Activated B cell treated with CpG ODN at 0.5 μM for 24 hours (primary cell): ENCODE measurements at regions of chr1 and their contacts with region 1.

Region 1: DNA sequence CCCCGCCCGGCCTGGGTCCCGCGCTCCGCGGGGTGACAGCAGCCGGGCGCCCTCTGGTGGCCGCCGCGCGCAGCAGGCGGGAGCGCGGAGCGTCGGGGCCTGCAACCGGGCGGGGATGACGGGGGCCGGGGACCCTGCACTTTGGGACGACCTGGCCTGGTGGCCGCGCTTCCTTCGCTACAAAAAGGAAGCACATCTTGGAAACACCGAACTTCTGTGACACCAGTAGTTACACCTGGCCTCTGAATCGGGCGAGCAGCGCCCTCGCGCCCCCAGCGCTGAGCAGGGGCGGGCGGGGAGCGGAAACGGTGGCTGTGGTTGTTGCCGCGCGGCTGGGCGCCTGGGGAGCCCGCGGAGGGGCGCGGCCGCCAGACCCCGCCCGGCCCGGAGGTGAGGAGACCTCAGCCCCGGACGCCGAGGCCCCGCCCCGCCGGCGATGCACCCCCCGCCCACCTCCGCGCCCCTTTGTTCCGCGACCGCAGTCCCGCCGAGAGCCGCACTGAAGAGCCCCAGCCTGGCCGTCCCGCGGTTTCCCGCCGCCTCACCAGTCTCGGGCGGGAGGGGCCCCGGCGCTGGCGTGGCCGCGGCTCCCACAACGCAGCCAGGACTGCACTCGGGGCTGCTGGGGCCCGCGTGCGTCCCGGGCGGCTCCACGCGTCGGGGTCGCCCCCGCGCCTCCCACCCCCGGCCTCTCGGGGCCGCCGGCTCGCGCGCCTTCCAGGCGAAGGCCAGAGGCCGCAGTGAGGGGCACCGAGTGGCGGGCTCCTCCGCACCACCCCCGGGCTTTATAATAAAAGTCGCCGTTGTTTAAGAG is 59.3 kb downstream of the H3-3A start:
- DNase-seq: peak; percentile 88
- ATAC-seq: peak; percentile 66
- H3K4me3 Mint-ChIP-seq: peak overlapping the region; percentile 92
- H3K27ac Mint-ChIP-seq: peak overlapping the region; percentile 100
- H3K4me1 Mint-ChIP-seq: peaks cover 79% of the 10 kb centered on the region
- H3K27me3 Mint-ChIP-seq: no peaks in the 10 kb centered on the region
- CTCF ChIP-seq: no peak

Region 2: GRCh38 chr1:225474986-225475820 is 646.6 kb before region 1 on chr1:
- CTCF ChIA-PET with region 1: no interaction called
- POLR2A ChIA-PET with region 1: no interaction called
- intact Hi-C with region 1: loop called (anchors 5 kb)
- DNase-seq: peak; percentile 84
- ATAC-seq: peak; percentile 83
- H3K4me3 Mint-ChIP-seq: no peak overlapping the region
- H3K27ac Mint-ChIP-seq: no peak overlapping the region
- H3K4me1 Mint-ChIP-seq: peaks cover 40% of the 10 kb centered on the region
- H3K27me3 Mint-ChIP-seq: no peaks in the 10 kb centered on the region
- CTCF ChIP-seq: peak; percentile 100

Region 3: DNA sequence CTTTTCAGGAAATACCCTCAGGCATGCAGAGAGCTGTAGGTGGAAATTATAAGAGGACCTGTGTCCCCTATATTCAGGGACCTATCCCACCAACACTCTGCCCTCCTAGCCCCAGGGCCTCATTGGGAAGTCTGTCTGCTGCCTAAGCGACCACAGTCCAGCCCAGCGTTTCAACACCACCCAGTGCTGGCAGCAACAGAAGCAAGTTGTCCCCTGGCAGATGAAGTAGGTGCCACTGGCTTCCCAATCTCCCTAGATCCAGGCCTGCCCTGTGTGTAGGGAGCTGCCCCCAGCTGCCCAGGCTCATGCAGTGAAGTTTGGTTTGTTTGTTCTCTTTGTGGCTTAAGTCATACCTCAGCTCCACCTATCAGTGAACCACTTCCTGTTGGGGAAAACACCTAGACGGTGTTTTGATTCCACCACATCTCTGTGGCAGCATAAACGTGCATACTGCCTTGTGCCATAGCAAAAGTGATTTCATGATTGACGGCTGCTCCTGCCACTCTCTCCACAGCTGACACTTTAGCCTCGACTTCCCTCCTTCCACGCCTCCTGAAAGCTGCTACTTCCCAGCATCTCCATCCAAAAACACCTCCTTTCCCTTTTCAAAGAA is 224.8 kb before region 1 on chr1:
- CTCF ChIA-PET with region 1: no interaction called
- POLR2A ChIA-PET with region 1: no interaction called
- intact Hi-C with region 1: no loop called
- DNase-seq: peak; percentile 34
- ATAC-seq: peak; percentile 99
- H3K4me3 Mint-ChIP-seq: peak overlapping the region; percentile 48
- H3K27ac Mint-ChIP-seq: peak overlapping the region; percentile 95
- H3K4me1 Mint-ChIP-seq: peaks cover 37% of the 10 kb centered on the region
- H3K27me3 Mint-ChIP-seq: no peaks in the 10 kb centered on the region
- CTCF ChIP-seq: no peak

Region 4: DNA sequence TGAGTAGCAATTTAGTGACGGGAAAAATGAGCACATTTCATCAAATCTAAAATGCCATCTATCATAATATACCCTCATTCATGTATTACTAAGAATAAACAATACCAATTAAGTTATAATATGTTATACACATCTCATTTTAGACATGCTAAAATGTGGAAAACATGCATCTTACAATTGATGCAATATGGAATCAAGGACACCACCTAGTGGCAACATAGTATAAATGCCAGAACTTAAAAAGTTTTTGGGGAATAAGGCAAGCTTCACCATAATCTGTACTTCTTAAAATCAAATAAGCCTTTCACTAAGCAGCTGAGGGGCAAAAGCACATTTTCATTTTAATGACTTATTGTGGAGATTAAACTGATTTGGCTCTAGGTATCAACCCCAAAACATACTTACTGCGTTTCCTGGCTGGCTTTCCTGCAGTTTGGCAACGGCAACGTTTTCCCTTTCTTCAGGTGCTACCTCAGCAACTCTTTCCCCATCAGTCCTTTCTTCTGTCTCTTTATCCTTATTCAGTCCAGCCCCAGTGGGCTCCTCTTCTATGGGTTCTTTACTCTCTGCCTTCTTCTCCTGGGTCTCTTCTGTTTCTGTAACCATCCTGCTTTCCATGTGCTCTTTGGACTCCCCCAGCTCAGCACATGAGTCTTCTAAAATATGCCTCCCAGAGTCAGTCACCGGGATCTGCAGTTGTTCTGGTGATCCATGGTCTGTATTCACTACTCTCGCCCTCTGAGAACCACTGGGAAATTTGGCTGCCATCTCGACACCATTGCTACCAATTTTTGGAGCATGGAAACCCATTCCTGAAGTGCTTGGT is 134.1 kb before region 1 on chr1:
- CTCF ChIA-PET with region 1: interaction called, 3 read pairs
- POLR2A ChIA-PET with region 1: no interaction called
- intact Hi-C with region 1: loop called (anchors 1 kb)
- DNase-seq: no peak
- ATAC-seq: peak; percentile 69
- H3K4me3 Mint-ChIP-seq: no peak overlapping the region
- H3K27ac Mint-ChIP-seq: peak overlapping the region; percentile 5
- H3K4me1 Mint-ChIP-seq: peaks cover 23% of the 10 kb centered on the region
- H3K27me3 Mint-ChIP-seq: no peaks in the 10 kb centered on the region
- CTCF ChIP-seq: peak; percentile 54

Region 5: DNA sequence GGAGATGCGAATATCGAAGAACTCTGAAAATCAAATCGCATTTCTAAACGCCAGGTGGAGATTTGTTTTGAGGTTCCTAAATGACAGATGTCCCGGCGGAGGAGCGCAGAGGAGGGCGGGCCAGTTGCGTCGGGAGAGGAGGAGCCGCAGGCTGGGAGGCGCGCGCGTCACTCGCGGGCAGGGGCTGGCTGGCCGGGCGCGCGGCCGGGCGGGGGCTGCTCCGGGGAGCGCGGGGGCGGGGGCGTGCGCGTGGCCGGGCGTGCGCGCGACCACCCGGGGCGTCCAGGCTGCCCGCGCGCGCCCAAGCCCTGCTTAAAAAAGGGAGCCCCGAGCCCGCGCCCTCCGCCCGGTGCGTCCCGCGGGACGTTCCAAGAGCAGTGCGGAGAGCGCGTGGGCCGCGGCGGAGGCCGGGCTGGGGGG is 12.0 kb before region 1 on chr1:
- CTCF ChIA-PET with region 1: interaction called, 29 read pairs
- POLR2A ChIA-PET with region 1: interaction called, 182 read pairs
- intact Hi-C with region 1: loop called (anchors 1 kb)
- DNase-seq: peak; percentile 90
- ATAC-seq: peak; percentile 66
- H3K4me3 Mint-ChIP-seq: peak overlapping the region; percentile 91
- H3K27ac Mint-ChIP-seq: peak overlapping the region; percentile 93
- H3K4me1 Mint-ChIP-seq: peaks cover 42% of the 10 kb centered on the region
- H3K27me3 Mint-ChIP-seq: no peaks in the 10 kb centered on the region
- CTCF ChIP-seq: no peak

Region 6: DNA sequence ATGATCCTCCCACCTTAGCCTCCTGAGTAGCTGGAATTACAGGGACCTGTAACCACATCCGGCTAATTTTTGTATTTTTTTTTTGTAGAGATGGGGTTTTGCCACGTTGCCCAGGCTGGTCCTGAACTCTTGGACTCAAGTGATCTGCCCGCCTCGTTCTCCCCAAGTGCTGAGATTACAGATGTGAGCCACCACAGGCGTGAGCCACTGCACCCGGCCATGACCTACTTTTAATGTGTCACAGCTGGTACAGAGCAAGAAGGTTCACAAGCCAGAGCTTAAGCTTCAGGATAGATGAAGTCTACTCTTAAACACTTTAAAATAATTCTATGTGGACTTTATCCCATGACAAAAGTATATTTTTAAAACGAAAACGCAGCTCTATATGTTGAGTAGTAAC is 41.1 kb after region 1 on chr1:
- CTCF ChIA-PET with region 1: interaction called, 26 read pairs
- POLR2A ChIA-PET with region 1: interaction called, 5 read pairs
- intact Hi-C with region 1: loop called (anchors 2 kb)
- DNase-seq: no peak
- ATAC-seq: no peak
- H3K4me3 Mint-ChIP-seq: no peak overlapping the region
- H3K27ac Mint-ChIP-seq: peak overlapping the region; percentile 18
- H3K4me1 Mint-ChIP-seq: peaks cover 48% of the 10 kb centered on the region
- H3K27me3 Mint-ChIP-seq: no peaks in the 10 kb centered on the region
- CTCF ChIP-seq: no peak

Region 7: DNA sequence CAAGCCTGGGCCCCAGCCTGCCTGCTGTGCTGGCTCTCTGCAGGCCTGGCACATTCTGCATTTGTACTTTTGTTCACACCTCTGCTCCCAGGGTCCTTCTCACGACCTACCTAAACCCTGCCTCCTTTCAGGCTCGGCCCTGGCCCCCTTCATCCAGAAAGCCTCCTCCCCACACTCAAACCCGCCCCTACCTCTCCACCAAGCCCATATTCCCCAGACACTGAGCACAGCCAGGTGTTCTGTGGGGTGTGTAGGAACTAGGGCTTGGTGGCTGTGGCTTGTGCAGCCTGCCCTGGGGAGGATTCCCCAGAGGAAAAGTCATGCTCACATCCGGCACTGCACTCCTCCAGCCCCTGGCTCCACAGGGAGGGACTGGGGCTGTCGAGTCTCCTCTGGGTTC is 93.4 kb after region 1 on chr1:
- CTCF ChIA-PET with region 1: no interaction called
- POLR2A ChIA-PET with region 1: no interaction called
- intact Hi-C with region 1: no loop called
- DNase-seq: no peak
- ATAC-seq: peak; percentile 52
- H3K4me3 Mint-ChIP-seq: no peak overlapping the region
- H3K27ac Mint-ChIP-seq: no peak overlapping the region
- H3K4me1 Mint-ChIP-seq: peaks cover 9% of the 10 kb centered on the region
- H3K27me3 Mint-ChIP-seq: no peaks in the 10 kb centered on the region
- CTCF ChIP-seq: no peak

Region 8: GRCh38 chr1:226308723-226309315 is 187.0 kb after region 1 on chr1 and contains the start of gene LIN9:
- CTCF ChIA-PET with region 1: interaction called, 4 read pairs
- POLR2A ChIA-PET with region 1: interaction called, 6 read pairs
- intact Hi-C with region 1: loop called (anchors 1 kb)
- DNase-seq: peak; percentile 91
- ATAC-seq: peak; percentile 92
- H3K4me3 Mint-ChIP-seq: peak within 1 kb of the TSS; percentile 92
- H3K27ac Mint-ChIP-seq: peak within 1 kb of the TSS; percentile 65
- H3K4me1 Mint-ChIP-seq: peaks cover 10% of the 10 kb centered on the region
- H3K27me3 Mint-ChIP-seq: peaks cover 4% of the 10 kb centered on the region
- CTCF ChIP-seq: no peak
- total RNA-seq, gene LIN9: 3.5 and 4.5 TPM in 2 replicates

Region 9: DNA sequence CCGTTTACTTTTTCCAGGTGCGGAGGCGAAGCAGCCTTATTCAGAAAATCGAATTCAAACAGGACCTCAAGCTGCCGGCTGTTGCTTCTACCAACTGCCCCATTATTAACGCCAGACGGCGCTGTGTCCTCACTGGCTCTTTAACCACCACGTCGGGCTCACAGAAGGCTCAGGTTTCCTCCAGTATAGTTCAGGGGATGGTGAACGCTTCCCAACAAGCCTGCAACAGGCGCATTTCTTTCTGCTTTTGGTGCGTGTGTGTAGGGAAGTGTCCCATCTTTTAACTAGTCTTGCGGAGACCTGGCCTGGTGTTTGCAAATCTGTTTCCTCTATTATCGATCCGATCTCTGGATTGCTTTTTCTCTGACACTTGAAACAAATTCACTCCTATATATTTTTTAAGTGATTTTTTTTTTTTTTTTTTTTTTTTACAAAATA is 426.0 kb after region 1 on chr1:
- CTCF ChIA-PET with region 1: interaction called, 3 read pairs
- POLR2A ChIA-PET with region 1: interaction called, 4 read pairs
- intact Hi-C with region 1: loop called (anchors 1 kb)
- DNase-seq: peak; percentile 52
- ATAC-seq: peak; percentile 71
- H3K4me3 Mint-ChIP-seq: peak overlapping the region; percentile 28
- H3K27ac Mint-ChIP-seq: no peak overlapping the region
- H3K4me1 Mint-ChIP-seq: peaks cover 21% of the 10 kb centered on the region
- H3K27me3 Mint-ChIP-seq: peaks cover 21% of the 10 kb centered on the region
- CTCF ChIP-seq: peak; percentile 50